ENCODE measurements at regions of chr12 and their contacts with region 1.

Region 1: GRCh38 chr12:48618541-48618940 is 48.7 kb upstream of the LALBA start:
- H3K4me3 ChIP-seq: no peak overlapping the region
- H3K27ac ChIP-seq: no peak overlapping the region
- H3K4me1 ChIP-seq: no peaks in the 10 kb centered on the region
- CTCF ChIP-seq: peak; percentile 87

Region 2: GRCh38 chr12:48527891-48528675 is 90.5 kb before region 1 on chr12:
- CTCF ChIA-PET with region 1: interaction called, 13 read pairs
- POLR2A ChIA-PET with region 1: no interaction called
- H3K4me3 ChIP-seq: no peak overlapping the region
- H3K27ac ChIP-seq: no peak overlapping the region
- H3K4me1 ChIP-seq: no peaks in the 10 kb centered on the region
- CTCF ChIP-seq: no peak

Region 3: DNA sequence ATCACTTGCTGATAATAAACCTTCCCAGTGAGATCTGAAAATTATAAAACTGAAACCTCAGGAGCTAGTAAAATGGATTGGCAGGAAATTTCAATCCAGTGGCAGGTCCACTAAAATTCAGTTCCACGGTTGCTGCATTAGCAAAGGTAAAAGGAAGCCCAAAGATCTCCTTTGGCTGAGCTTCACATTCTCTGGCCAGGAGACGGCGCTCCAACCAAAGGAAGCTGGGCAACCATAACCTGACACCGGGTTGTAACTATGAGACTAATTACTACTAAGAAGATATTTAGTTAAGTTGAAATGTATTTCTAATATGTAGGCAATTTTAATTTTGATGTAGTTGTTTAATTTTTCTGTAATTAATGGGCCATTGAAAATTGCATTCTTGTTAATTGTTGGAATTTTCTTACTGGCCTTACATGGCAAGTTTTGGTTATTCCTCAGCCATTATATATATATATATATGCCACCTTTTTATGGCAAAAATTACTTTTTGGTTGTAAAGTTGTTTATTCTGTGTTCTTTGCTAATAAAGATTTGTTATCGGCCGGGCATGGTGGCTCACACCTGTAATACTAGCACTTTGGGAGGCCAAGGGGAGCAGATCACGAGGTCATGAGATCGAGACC is 76.1 kb before region 1 on chr12:
- CTCF ChIA-PET with region 1: interaction called, 209 read pairs
- POLR2A ChIA-PET with region 1: no interaction called
- H3K4me3 ChIP-seq: no peak overlapping the region
- H3K27ac ChIP-seq: no peak overlapping the region
- H3K4me1 ChIP-seq: no peaks in the 10 kb centered on the region
- CTCF ChIP-seq: no peak

Region 4: GRCh38 chr12:48601013-48601756 is 17.4 kb before region 1 on chr12:
- CTCF ChIA-PET with region 1: interaction called, 26 read pairs
- POLR2A ChIA-PET with region 1: no interaction called
- H3K4me3 ChIP-seq: no peak overlapping the region
- H3K27ac ChIP-seq: no peak overlapping the region
- H3K4me1 ChIP-seq: no peaks in the 10 kb centered on the region
- CTCF ChIP-seq: no peak

Region 5: GRCh38 chr12:48631057-48631456 is 12.5 kb after region 1 on chr12:
- CTCF ChIA-PET with region 1: interaction called, 10 read pairs
- POLR2A ChIA-PET with region 1: no interaction called
- H3K4me3 ChIP-seq: no peak overlapping the region
- H3K27ac ChIP-seq: no peak overlapping the region
- H3K4me1 ChIP-seq: no peaks in the 10 kb centered on the region
- CTCF ChIP-seq: no peak

Measured in HEK293 (cell line).